Heart left ventricle (tissue), 16 donors: ENCODE measurements at regions of chr5 and their contacts with region 1.

Region 1: GRCh38 chr5:13994621-13995253 is 50.2 kb upstream of the DNAH5 start:
- DNase-seq: no peak
- ATAC-seq: no peak
- H3K4me3 ChIP-seq: no peak overlapping the region
- H3K27ac ChIP-seq: no peak overlapping the region
- H3K4me1 ChIP-seq: no peaks in the 10 kb centered on the region
- H3K27me3 ChIP-seq: peaks cover 0 to 4% (median 0%) of the 10 kb centered on the region in 9 donors
- CTCF ChIP-seq: no peak
- POLR2A ChIP-seq: no peak

Region 2: DNA sequence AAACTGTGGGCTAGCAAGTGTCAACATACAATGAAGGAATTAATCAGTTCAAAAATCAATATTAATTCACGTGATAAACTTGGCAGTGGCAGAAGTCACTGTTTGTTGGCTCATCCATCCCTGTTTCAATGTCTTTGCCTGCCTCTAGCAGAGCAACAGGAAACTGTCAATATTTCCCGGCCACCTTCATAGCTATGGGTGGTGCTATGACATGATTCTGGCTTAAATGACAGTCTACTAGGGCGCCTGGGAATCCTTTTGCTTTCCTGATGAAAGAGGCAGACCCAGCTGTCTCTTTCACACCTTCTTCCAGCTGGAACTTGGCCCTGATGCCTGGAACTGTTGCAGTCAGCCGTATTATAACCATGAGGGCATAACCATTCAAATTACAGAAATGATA is 21.8 kb after region 1 on chr5:
- intact Hi-C with region 1: no loop called
- DNase-seq: no peak
- ATAC-seq: no peak
- H3K4me3 ChIP-seq: no peak overlapping the region
- H3K27ac ChIP-seq: no peak overlapping the region
- H3K4me1 ChIP-seq: peaks cover 0 to 7% (median 4%) of the 10 kb centered on the region in 12 donors
- H3K27me3 ChIP-seq: peaks cover 0 to 4% (median 0%) of the 10 kb centered on the region in 9 donors
- CTCF ChIP-seq: no peak
- POLR2A ChIP-seq: no peak

Region 3: DNA sequence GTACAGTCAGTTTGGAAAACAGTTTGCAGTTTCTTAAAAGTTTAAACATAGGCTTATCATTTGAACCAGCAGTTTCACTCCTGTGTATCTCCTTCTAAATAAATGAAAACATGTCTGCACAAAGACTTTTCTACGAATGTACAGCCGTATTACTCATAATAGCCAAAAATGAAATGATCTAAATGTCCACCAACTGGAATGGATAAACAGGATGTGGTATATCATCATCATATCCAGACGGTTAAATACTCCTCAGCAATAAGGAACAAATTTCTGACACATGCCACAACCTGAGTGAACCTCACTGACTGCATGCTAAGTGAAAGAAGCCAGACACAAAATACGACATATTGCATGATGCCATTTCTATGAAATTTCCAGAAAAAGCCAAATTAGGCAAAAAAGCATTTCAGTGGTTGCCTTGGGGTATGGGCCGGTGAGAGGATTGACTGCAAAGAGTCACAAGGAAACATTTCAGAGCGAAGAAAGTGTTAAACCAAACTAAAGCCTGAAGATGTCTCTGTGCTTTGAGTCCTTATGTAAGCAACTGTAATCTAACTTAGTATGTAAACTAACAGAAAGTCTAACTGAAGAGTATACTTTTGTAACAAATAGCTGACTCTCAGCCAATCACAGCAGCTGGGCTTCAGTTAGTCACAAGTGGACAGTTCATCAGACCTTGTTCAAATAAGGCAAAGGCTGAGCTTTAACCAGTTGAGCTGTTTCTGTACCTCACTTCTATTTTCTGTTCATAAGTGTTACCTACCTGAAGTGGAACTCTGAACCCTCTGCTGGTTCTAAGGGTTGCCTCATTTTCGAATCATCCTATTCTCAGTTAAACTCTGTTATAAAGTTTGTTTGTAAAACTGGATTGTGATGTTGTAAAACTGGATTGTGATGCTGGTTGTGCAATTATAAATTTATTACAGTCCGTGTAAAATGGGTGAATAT is 213.6 kb after region 1 on chr5:
- intact Hi-C with region 1: no loop called
- DNase-seq: no peak
- ATAC-seq: peak in 2 of 4 donors; percentile 29 to 54
- H3K4me3 ChIP-seq: no peak overlapping the region
- H3K27ac ChIP-seq: peak overlapping the region in 2 of 12 donors; percentile 35 to 63
- H3K4me1 ChIP-seq: peaks cover 5 to 83% (median 44%) of the 10 kb centered on the region in 12 donors
- H3K27me3 ChIP-seq: no peaks in the 10 kb centered on the region
- CTCF ChIP-seq: no peak
- POLR2A ChIP-seq: no peak

Region 4: DNA sequence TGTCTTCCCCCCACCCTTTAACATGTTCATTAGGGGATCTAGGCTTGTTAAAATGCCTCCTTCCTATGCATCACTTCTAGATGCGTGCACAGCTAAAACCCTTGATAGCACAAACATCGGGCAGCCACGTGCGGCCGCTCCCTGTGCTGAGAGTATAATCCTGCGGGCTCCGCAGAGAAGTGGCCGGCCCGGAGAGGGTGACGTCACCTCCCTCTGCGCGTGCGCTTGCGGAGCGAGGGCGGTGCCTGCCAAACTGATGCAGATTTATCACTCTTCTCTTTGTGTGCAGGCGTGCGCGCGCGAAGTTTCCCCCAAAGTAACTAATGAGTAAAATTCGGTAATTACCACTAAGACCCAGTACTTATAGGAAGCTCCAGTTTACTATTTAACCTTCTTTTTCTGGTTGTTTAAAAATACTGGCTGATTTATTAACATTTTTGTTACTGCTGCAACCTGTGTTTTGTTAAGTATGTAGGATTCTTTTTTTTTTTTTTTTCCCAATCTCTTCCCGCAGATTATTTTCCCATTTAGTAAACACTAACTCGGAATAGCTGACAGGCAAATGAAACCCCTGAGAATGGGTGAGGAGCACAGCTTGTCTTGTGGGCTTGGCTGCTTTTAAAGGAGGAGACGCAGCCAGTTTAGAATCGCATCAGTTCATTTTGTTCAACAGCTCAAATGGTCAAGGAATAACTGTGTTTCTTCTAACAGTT is 270.0 kb after region 1 on chr5:
- intact Hi-C with region 1: loop called in 1 of 10 experiments (anchors 5 kb)
- DNase-seq: peak; percentile 89 to 95 (median 93)
- ATAC-seq: peak; percentile 89 to 95 (median 94)
- H3K4me3 ChIP-seq: peak overlapping the region in 9 of 12 donors; percentile 4 to 45 (median 27)
- H3K27ac ChIP-seq: peak overlapping the region in 6 of 12 donors; percentile 1 to 38 (median 10)
- H3K4me1 ChIP-seq: peaks cover 12 to 73% (median 49%) of the 10 kb centered on the region in 12 donors
- H3K27me3 ChIP-seq: no peaks in the 10 kb centered on the region
- CTCF ChIP-seq: no peak
- POLR2A ChIP-seq: peak in 1 of 2 donors; percentile 28

Region 5: GRCh38 chr5:14331386-14331781 is 336.6 kb after region 1 on chr5:
- intact Hi-C with region 1: loop called in 1 of 10 experiments (anchors 10 kb)
- DNase-seq: no peak
- ATAC-seq: no peak
- H3K4me3 ChIP-seq: no peak overlapping the region
- H3K27ac ChIP-seq: peak overlapping the region in 1 of 12 donors; percentile 32
- H3K4me1 ChIP-seq: peaks cover 0 to 29% (median 3%) of the 10 kb centered on the region in 12 donors
- H3K27me3 ChIP-seq: no peaks in the 10 kb centered on the region
- CTCF ChIP-seq: no peak
- POLR2A ChIP-seq: no peak

Region 6: DNA sequence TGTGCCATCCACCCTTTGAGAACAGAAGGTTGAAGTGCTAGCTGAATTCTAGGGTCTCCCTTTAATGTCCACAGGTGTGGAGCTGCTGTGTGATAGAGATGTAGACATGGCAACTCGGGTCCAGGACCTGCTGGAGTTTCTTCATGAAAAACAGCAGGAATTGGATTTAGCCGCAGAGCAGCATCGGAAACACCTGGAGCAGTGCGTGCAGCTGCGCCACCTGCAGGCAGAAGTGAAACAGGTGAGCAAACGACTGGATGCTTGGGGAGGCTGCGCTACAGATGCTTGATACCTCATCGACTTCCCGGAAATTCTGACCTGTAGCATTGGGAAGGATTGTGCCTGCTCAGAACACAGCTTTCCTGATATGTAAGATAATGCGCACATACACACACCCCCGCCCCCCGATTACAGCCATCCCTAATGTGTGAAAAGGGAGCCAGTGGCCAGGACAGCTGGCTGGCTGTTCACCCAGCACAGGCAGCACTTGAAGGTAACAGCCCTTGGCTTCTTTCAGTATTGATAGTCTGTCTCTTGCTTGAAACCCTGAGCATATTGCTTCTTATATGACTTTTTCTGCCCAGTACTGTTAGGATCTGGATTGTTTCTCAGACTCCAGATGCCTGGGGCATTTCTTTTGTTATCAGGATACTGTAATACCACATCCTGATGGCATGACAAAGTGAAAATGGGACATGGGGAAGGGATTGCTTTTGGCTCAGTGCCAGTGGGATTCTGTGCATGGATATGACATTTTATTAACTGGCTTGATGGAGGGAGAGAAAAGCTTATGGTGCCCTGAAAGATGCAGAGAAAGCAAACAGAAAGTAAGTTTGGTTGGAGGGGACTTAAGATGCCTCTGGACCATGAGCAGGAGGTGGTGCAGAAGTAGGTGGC is 370.1 kb after region 1 on chr5:
- intact Hi-C with region 1: loop called in 5 of 10 experiments (anchors 5 to 10 kb)
- DNase-seq: no peak
- ATAC-seq: peak in 2 of 4 donors; percentile 6 to 18
- H3K4me3 ChIP-seq: no peak overlapping the region
- H3K27ac ChIP-seq: no peak overlapping the region
- H3K4me1 ChIP-seq: peaks cover 0 to 13% (median 2%) of the 10 kb centered on the region in 12 donors
- H3K27me3 ChIP-seq: no peaks in the 10 kb centered on the region
- CTCF ChIP-seq: peak in 11 of 12 donors; percentile 12 to 60 (median 36)
- POLR2A ChIP-seq: no peak